ENCODE measurements at regions of chr3 and their contacts with region 1.

Region 1: DNA sequence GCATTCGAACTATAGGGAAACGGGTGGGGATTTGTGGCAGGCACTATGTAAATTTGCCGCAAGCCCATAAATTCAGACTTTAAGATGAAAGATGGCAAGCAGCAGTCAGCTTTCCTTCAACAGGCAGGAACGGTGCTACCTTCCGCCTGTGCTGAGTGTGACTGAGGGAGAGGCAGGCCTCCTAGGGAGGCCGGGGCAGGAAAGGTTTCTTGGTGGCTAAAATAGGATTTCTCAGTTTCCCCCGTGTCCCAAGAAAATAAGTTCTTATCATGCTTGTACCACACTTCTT is 12.5 kb downstream of the FLNB start:
- DNase-seq: no peak
- H3K4me3 ChIP-seq: no peak overlapping the region
- H3K27ac ChIP-seq: peak overlapping the region; percentile 11
- H3K4me1 ChIP-seq: peaks cover 65% of the 10 kb centered on the region
- H3K27me3 ChIP-seq: no peaks in the 10 kb centered on the region
- CTCF ChIP-seq: no peak

Region 2: DNA sequence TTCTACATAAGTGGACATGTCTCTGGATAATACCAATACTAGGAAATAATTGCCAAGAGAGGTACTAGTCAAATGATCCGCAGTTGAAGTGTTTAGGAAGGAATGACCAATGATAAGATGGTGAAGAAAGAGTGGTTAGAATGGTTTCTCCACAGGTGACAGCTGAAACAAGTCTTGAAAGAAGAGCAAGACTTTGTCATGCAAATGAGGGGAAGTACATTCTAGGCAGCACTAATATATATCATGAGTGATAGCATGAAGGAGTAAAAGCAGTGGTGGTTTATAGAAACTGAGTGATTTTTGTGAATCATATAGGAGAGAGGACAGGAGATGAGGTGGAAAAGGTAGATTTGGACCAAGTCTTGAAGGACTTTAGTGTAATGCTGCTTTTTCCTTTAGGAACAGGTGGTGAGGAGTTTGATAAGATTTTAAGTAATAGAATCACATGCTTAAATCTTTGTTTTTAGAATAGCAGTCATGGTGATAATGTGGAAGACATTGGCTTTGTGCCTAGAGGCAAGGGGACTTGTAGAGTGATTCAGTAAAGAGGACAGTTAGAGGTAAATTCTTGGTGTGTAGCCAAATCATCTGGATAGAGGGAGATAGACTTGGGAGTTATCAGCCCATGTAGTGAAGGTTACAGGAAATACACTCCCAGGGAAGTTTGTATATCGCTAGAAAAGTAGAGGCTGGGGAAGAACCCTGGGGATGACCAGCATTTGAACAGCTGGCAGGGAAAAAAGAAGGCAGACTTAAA is 232.7 kb before region 1 on chr3:
- CTCF ChIA-PET with region 1: no interaction called
- dilution Hi-C with region 1: no loop called
- in situ Hi-C with region 1: no loop called
- intact Hi-C with region 1: no loop called
- DNase-seq: peak; percentile 37
- H3K4me3 ChIP-seq: no peak overlapping the region
- H3K27ac ChIP-seq: no peak overlapping the region
- H3K4me1 ChIP-seq: peaks cover 29% of the 10 kb centered on the region
- H3K27me3 ChIP-seq: no peaks in the 10 kb centered on the region
- CTCF ChIP-seq: no peak

Region 3: DNA sequence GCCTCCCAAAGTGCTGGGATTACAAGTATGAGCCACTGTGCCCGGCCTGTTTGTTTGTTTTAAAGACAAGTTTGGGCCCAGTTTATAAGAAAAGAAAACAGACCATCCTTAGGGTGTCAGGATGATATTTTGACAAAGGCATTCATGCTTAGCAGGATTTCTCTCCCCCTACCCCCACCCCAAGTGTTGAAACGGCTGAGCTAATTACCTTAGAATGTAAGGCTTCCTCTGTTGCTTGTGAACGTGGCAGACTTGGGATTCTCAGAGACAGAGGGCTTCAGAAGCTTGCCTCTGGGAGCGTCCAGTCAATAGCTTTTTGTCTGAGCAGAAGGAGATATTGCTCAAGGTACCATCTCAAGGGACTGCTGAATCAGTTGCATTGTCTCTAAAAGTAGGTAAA is 11.5 kb after region 1 on chr3:
- CTCF ChIA-PET with region 1: no interaction called
- dilution Hi-C with region 1: no loop called
- in situ Hi-C with region 1: no loop called
- intact Hi-C with region 1: loop called (anchors 1 kb)
- DNase-seq: peak; percentile 87
- H3K4me3 ChIP-seq: no peak overlapping the region
- H3K27ac ChIP-seq: peak overlapping the region; percentile 1
- H3K4me1 ChIP-seq: peaks cover 45% of the 10 kb centered on the region
- H3K27me3 ChIP-seq: no peaks in the 10 kb centered on the region
- CTCF ChIP-seq: no peak

Region 4: DNA sequence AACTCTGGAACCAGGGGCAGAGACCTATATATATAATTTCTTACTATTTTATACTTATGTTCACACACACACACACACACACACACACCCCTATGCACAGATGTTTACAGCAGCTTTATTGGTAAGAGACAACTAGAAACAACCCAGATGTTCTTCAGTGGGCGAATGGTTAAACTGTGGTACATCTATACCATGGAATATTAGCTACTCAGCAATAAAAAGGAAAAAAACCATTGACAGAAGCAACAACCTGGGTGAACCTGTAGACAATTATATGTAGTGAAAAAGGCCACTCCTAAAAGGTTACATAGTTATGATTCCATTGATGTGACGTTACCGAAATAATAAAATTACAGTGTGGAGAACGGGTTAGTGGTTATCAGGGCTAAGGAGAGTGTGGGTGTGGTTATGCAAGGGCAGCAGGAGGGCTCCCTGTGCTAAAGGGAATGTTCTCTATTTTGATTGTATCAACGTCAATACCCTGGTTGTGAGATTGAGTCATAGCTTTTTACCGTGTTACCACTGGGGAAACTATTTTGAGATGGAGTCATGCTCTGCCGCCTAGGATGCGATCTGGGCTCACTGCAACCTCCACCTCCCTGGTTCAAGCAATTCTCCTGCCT is 73.0 kb after region 1 on chr3:
- CTCF ChIA-PET with region 1: no interaction called
- dilution Hi-C with region 1: loop called (anchors 5 kb)
- in situ Hi-C with region 1: no loop called
- intact Hi-C with region 1: no loop called
- DNase-seq: peak; percentile 82
- H3K4me3 ChIP-seq: no peak overlapping the region
- H3K27ac ChIP-seq: no peak overlapping the region
- H3K4me1 ChIP-seq: no peaks in the 10 kb centered on the region
- H3K27me3 ChIP-seq: no peaks in the 10 kb centered on the region
- CTCF ChIP-seq: no peak

Region 5: GRCh38 chr3:58151637-58152036 is 130.9 kb after region 1 on chr3:
- CTCF ChIA-PET with region 1: no interaction called
- dilution Hi-C with region 1: loop called (anchors 5 kb)
- in situ Hi-C with region 1: no loop called
- intact Hi-C with region 1: no loop called
- DNase-seq: no peak
- H3K4me3 ChIP-seq: no peak overlapping the region
- H3K27ac ChIP-seq: no peak overlapping the region
- H3K4me1 ChIP-seq: no peaks in the 10 kb centered on the region
- H3K27me3 ChIP-seq: no peaks in the 10 kb centered on the region
- CTCF ChIP-seq: no peak

Measured in mammary epithelial cell (primary cell).